ENCODE measurements at regions of chr9 and their contacts with region 1.

Region 1: DNA sequence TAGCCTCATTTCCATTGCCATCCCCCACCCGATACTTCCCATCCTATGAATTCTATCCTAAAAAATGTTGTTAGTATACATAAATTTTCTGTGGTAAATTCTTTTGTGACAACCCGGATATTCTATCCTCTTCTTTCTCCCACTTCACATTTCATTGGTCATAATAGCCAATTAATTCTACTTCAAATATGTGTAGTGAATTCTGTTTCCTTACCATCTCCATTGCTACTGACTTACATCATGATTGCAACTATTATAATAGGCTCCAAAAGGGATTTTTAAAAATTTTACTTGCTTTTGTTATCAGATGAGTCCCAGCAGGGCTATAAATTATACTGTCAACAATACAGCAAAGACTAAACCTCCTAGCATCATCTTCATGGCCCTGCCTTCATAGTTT is 1326.8 kb downstream of the PTPRD start:
- DNase-seq: no peak
- ATAC-seq: no peak
- H3K4me3 Mint-ChIP-seq: no peak overlapping the region
- H3K27ac Mint-ChIP-seq: no peak overlapping the region
- H3K4me1 Mint-ChIP-seq: no peaks in the 10 kb centered on the region
- H3K27me3 Mint-ChIP-seq: no peaks in the 10 kb centered on the region

Region 2: DNA sequence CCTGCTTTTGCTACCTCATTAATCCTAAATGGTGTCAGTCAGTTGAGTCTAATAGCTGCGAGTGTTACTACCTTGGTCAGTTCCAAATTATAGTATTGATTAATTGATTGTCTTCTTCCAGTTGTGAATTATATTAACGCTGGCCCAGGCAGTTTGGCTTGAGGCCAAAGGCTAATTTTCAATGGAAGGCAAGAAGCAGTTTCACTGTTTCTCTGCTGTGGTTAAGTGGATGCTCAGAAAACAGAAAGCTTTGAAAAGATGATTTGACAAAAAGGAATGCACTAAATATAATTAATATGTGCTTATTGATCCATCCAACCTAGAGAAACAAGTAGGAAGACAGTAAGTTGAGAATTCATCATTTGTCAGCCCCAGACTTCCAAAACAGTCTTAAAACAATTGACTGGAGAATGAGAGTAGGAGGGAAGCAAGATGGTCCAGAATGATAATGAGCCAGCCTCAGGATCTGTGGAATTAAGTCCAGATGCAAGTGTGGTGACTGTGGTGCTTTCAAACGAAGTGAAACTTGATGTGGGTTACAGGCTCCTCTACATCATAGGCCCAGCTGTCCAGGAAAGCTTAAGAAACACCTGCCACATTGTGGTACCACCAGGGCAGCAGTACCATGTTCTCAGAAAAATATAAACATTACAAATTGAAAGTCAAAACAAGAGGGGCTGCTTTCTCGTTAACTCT is 115.4 kb before region 1 on chr9:
- CTCF ChIA-PET with region 1: no interaction called
- POLR2A ChIA-PET with region 1: no interaction called
- intact Hi-C with region 1: no loop called
- DNase-seq: no peak
- ATAC-seq: no peak
- H3K4me3 Mint-ChIP-seq: no peak overlapping the region
- H3K27ac Mint-ChIP-seq: no peak overlapping the region
- H3K4me1 Mint-ChIP-seq: no peaks in the 10 kb centered on the region
- H3K27me3 Mint-ChIP-seq: no peaks in the 10 kb centered on the region

Region 3: DNA sequence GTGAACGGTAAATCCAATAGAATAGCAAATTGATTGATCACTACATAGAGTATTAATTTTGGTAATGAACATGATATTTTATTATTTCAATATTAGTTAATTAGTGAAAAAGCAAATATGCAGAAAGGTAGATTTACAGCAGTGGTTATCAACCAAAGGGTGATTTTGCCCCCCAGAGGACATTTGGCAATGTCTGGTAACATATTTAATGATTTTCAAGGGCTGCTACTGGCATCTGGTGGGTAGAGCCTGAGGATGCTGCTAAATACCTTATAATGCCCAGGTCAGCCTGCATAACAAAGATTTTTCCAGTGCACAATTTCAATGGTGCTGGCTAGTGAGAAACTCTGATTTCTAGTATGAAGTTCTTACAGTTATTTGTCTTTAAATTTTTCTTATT is 13.1 kb after region 1 on chr9:
- CTCF ChIA-PET with region 1: no interaction called
- POLR2A ChIA-PET with region 1: no interaction called
- intact Hi-C with region 1: loop called in 1 of 2 experiments (anchors 2 kb)
- DNase-seq: no peak
- ATAC-seq: no peak
- H3K4me3 Mint-ChIP-seq: no peak overlapping the region
- H3K27ac Mint-ChIP-seq: no peak overlapping the region
- H3K4me1 Mint-ChIP-seq: no peaks in the 10 kb centered on the region
- H3K27me3 Mint-ChIP-seq: no peaks in the 10 kb centered on the region

Region 4: GRCh38 chr9:9305600-9305999 is 19.6 kb after region 1 on chr9:
- CTCF ChIA-PET with region 1: no interaction called
- POLR2A ChIA-PET with region 1: no interaction called
- intact Hi-C with region 1: loop called in 1 of 2 experiments (anchors 2 kb)
- DNase-seq: no peak
- ATAC-seq: no peak
- H3K4me3 Mint-ChIP-seq: no peak overlapping the region
- H3K27ac Mint-ChIP-seq: no peak overlapping the region
- H3K4me1 Mint-ChIP-seq: no peaks in the 10 kb centered on the region
- H3K27me3 Mint-ChIP-seq: no peaks in the 10 kb centered on the region

Region 5: DNA sequence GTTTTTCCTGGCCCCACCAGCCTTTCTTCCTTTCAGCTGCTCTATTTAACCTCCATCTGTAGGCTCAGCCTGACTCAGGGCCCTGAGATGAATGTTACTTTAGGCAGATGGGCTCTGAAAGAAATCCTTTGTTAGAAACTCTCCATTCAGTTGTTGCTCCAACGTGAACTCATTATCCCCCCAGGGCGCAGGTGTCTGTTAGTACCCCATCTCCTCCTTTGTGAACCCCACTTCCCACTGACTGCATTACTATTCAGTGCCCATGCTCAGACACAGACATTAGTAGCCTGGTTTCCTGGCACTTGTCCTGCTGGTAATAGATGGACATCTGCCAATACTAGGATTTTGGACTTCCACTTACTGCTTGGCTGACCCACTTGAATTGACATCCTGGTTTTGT is 55.2 kb after region 1 on chr9:
- CTCF ChIA-PET with region 1: no interaction called
- POLR2A ChIA-PET with region 1: no interaction called
- intact Hi-C with region 1: loop called in 1 of 2 experiments (anchors 10 kb)
- DNase-seq: no peak
- ATAC-seq: no peak
- H3K4me3 Mint-ChIP-seq: no peak overlapping the region
- H3K27ac Mint-ChIP-seq: no peak overlapping the region
- H3K4me1 Mint-ChIP-seq: no peaks in the 10 kb centered on the region
- H3K27me3 Mint-ChIP-seq: no peaks in the 10 kb centered on the region

Region 6: DNA sequence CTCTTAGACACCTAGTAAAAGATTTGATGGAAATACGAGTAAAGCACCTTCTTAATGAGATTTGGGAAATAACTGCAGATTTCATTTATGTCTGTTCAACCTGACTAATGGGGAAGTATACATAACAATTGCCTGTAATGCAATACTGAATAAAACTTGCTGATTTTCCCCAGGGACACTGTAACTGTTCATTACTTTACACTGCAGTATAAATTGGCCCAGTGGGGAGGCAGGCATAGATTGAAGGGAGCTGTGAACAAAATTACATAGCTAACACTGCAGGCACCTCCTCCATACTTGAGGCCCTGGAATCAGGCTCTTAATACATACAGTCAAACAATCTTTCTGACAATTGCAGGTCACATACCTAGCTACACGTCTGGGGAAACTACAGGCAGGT is 1110.6 kb after region 1 on chr9:
- CTCF ChIA-PET with region 1: no interaction called
- POLR2A ChIA-PET with region 1: no interaction called
- intact Hi-C with region 1: no loop called
- DNase-seq: no peak
- ATAC-seq: no peak
- H3K4me3 Mint-ChIP-seq: no peak overlapping the region
- H3K27ac Mint-ChIP-seq: no peak overlapping the region
- H3K4me1 Mint-ChIP-seq: no peaks in the 10 kb centered on the region
- H3K27me3 Mint-ChIP-seq: no peaks in the 10 kb centered on the region

Measured in activated CD4-positive, alpha-beta T cell treated with anti-CD3 and anti-CD28 coated beads for 36 hours (primary cell).